ENCODE measurements at regions of chr20 and their contacts with region 1.

Region 1: GRCh38 chr20:1212607-1213396 is 9.5 kb downstream of the C20orf202 start:
- DNase-seq: peak; percentile 86
- ATAC-seq: peak; percentile 76
- H3K4me3 Mint-ChIP-seq: no peak overlapping the region
- H3K27ac Mint-ChIP-seq: no peak overlapping the region
- H3K4me1 Mint-ChIP-seq: peaks cover 33% of the 10 kb centered on the region
- H3K27me3 Mint-ChIP-seq: peaks cover 5% of the 10 kb centered on the region
- CTCF ChIP-seq: peak; percentile 91

Region 2: DNA sequence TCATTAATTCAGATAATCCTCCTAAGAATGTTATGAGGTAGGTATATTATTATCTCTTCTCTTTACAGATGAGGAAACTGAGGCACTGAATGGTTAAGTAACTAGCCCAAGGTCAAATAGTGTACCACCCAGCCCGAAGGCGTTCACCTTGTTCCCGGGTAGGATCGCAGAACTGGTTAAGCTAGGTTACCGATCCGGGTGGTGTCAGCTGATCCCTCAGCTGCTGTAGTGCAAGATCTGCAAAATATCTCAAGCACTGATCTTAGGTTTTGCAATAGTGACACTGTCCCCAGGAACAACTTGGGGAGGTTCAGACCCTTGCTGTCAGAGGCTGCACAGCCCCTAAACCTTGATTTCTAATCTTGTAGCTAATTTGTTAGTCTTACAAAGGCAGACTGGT is 472.7 kb before region 1 on chr20:
- CTCF ChIA-PET with region 1: no interaction called
- POLR2A ChIA-PET with region 1: no interaction called
- intact Hi-C with region 1: no loop called
- DNase-seq: no peak
- ATAC-seq: no peak
- H3K4me3 Mint-ChIP-seq: no peak overlapping the region
- H3K27ac Mint-ChIP-seq: no peak overlapping the region
- H3K4me1 Mint-ChIP-seq: no peaks in the 10 kb centered on the region
- H3K27me3 Mint-ChIP-seq: peaks cover 4% of the 10 kb centered on the region
- CTCF ChIP-seq: no peak

Region 3: DNA sequence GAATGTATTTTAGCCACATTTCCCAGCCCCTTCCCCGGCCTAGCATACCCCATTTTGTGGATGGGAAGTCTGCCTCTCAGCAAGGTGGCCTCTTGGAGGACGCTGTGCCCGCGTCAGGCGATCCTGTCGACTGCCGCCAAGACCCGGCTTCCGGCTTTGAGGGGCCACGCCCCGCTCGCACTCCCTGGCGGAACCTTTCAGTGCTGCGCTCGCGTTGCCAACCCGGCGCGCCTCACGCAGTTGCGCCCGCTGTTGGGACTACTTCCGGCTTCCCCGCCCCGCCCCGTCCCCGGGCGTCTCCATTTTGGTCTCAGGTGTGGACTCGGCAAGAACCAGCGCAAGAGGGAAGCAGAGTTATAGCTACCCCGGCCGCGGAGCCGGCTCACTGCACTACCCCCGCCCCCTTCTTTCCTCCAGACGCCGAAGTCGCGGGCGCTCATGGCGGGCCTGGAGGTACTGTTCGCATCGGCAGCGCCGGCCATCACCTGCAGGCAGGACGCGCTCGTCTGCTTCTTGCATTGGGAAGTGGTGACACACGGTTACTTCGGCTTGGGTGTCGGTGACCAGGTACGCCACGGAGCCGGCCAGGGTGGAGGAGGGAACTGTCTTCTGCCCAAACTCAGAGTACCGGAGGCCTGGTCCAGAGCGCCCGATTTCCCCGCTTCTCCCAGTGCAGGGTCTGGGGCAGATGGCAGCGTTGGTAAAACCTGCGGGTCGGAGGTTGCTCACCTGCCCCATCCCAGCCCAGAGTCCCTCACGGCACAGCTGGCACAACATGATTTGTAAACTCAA is 94.3 kb before region 1 on chr20 and contains the start of gene PSMF1:
- CTCF ChIA-PET with region 1: interaction called, 5 read pairs
- POLR2A ChIA-PET with region 1: no interaction called
- intact Hi-C with region 1: loop called (anchors 10 kb)
- DNase-seq: peak; percentile 95
- ATAC-seq: peak; percentile 98
- H3K4me3 Mint-ChIP-seq: peak within 1 kb of the TSS; percentile 83
- H3K27ac Mint-ChIP-seq: peak within 1 kb of the TSS; percentile 82
- H3K4me1 Mint-ChIP-seq: peaks cover 49% of the 10 kb centered on the region
- H3K27me3 Mint-ChIP-seq: no peaks in the 10 kb centered on the region
- CTCF ChIP-seq: no peak
- total RNA-seq, gene PSMF1: 150 to 154 TPM

Region 4: DNA sequence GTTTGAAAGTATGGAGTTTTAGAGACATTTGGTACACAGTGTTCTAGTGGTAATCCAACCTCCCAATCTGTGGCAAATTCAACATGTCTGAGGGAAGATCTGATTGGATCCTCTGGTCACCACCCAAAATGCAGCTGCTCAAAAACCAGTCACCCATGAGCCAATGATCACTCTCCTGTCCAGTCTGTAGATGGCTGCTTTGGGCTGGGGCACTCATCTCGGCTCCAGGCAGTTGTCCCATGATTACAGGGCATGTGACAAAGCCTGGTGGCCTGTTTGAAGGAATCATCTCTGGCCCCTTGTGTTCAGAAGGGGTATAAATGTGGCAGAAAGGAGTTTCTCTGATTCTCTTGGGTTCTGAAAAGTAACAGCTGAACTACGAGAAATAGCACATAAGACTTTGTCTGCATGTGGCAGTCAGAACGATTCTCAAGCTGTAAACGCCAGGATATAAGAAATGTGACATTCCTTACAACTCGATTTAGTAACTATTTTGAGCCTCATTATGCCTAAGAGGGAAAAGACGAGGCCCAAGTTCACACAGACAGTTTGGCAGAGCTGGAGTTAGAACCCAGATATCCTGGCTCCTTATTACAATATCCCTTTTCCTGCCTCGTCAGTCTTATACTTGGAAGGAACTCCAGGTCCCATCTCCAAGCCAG is 13.5 kb before region 1 on chr20:
- CTCF ChIA-PET with region 1: interaction called, 11 read pairs
- POLR2A ChIA-PET with region 1: interaction called, 3 read pairs
- intact Hi-C with region 1: no loop called
- DNase-seq: no peak
- ATAC-seq: no peak
- H3K4me3 Mint-ChIP-seq: no peak overlapping the region
- H3K27ac Mint-ChIP-seq: no peak overlapping the region
- H3K4me1 Mint-ChIP-seq: peaks cover 4% of the 10 kb centered on the region
- H3K27me3 Mint-ChIP-seq: no peaks in the 10 kb centered on the region
- CTCF ChIP-seq: no peak

Region 5: GRCh38 chr20:1225783-1226654 is 13.2 kb after region 1 on chr20 and contains the start of gene RAD21L1:
- CTCF ChIA-PET with region 1: interaction called, 13 read pairs
- POLR2A ChIA-PET with region 1: interaction called, 4 read pairs
- intact Hi-C with region 1: no loop called
- DNase-seq: peak; percentile 82
- ATAC-seq: peak; percentile 92
- H3K4me3 Mint-ChIP-seq: peak within 1 kb of the TSS; percentile 80
- H3K27ac Mint-ChIP-seq: peak within 1 kb of the TSS; percentile 68
- H3K4me1 Mint-ChIP-seq: no peaks in the 10 kb centered on the region
- H3K27me3 Mint-ChIP-seq: peaks cover 15% of the 10 kb centered on the region
- CTCF ChIP-seq: no peak
- total RNA-seq, gene RAD21L1: 0.18 to 0.25 TPM